GM10248 (cell line): ENCODE measurements at regions of chr19 and their contacts with region 1.

Region 1: GRCh38 chr19:40305403-40305802 is 20.3 kb upstream of the AKT2 start:
- DNase-seq: peak; percentile 87
- CTCF ChIP-seq: peak; percentile 75

Region 2: GRCh38 chr19:40279120-40279551 is 26.3 kb before region 1 on chr19:
- CTCF ChIA-PET with region 1: interaction called, 24 read pairs
- POLR2A ChIA-PET with region 1: interaction called, 7 read pairs
- DNase-seq: no peak
- CTCF ChIP-seq: no peak

Region 3: GRCh38 chr19:40294560-40294959 is 10.8 kb before region 1 on chr19:
- CTCF ChIA-PET with region 1: interaction called, 12 read pairs
- POLR2A ChIA-PET with region 1: interaction called, 3 read pairs
- DNase-seq: no peak
- CTCF ChIP-seq: no peak

Region 4: DNA sequence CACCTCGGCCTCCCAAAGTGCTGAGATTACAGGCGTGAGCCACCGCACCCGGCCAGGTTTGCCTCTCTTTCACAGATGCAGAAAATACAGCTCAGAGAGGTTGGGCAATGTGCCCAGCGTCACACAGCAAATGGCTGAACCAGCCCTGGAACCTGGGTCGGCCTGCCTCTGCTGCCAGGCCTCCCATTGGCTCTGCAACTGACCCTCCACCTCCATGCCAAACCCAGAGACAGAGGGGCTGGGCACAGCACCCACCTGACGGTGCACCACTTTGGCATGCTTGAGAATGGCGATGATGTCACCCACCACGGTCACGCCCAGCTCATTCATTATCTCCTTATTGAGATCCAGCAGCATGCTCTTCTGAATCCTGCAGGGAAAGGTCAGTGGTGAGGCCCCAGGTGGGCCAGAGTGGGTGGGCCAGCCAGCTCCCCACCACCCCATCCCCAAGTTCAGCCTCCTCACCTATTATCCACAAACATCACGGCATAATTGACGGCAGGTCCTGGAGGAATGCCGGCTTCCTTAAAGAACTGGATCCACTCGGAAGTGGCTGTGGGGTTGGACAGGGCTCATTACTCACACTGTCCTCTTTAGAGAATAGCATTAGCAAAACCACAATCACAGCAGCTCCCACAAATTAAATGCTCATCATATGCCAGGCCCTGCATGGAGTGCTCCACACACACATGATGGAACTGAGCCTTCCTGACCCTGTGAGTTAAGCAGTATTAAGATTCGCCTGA is 30.6 kb after region 1 on chr19:
- CTCF ChIA-PET with region 1: interaction called, 18 read pairs
- POLR2A ChIA-PET with region 1: no interaction called
- DNase-seq: no peak
- CTCF ChIP-seq: no peak

Region 5: DNA sequence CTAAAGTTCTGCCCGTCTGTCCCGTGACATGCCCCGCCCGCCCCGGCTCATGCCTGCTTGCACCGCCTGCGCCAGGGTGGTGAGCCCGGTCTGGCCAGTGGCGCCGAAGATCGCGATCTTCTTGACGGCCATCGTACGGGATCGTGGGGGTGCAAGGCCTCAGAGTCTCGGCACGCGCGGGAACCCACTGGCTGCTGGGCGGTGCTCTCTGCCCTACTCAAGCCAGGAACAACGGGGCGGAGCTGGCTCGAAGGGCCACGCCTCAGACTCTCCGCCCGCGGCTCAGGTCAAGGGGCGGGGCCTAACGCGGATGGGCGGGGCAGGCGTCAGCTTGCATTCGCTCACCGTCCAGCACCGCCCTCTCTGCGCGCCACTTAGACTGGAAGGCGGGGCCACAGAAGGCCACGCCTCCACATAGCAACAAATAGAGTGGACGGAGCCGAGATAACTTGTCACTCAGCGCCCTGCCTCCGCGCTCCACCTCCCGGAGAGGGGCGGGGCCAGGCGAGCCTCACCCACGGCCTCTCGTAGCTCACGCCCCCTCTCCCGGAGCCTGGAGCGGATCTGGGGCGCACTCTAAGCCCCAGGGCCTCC is 160.3 kb after region 1 on chr19 and contains the start of gene BLVRB:
- CTCF ChIA-PET with region 1: interaction called, 11 read pairs
- POLR2A ChIA-PET with region 1: interaction called, 3 read pairs
- DNase-seq: peak; percentile 99
- CTCF ChIP-seq: no peak

Region 6: GRCh38 chr19:40603389-40604135 is 298.2 kb after region 1 on chr19:
- CTCF ChIA-PET with region 1: interaction called, 27 read pairs
- POLR2A ChIA-PET with region 1: no interaction called
- DNase-seq: peak; percentile 94
- CTCF ChIP-seq: no peak